ENCODE measurements at regions of chr4 and their contacts with region 1.

Region 1: DNA sequence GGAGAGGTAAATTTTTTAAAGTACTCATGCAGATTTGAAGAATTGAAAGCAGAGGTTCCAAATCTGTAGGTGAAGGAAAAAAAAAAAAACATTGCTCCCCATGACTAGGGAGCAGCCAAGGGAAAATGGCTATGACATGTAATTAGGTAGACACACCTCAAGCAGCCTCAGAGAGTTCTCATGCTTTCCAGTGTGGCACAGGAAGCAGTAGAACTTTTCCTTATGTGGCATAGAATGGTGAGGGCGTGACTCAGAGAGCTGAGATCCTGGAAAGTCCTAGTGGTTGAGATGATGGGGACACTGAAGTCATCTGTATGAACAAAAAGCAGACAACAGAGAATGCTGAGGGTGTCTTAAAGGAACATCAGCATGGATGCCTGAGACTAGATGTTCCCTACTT is 148.6 kb upstream of the NWD2 start:
- DNase-seq: no peak
- H3K4me3 ChIP-seq: no peak overlapping the region
- H3K27ac ChIP-seq: no peak overlapping the region
- H3K4me1 ChIP-seq: no peaks in the 10 kb centered on the region
- H3K27me3 ChIP-seq: no peaks in the 10 kb centered on the region
- CTCF ChIP-seq: no peak

Region 2: DNA sequence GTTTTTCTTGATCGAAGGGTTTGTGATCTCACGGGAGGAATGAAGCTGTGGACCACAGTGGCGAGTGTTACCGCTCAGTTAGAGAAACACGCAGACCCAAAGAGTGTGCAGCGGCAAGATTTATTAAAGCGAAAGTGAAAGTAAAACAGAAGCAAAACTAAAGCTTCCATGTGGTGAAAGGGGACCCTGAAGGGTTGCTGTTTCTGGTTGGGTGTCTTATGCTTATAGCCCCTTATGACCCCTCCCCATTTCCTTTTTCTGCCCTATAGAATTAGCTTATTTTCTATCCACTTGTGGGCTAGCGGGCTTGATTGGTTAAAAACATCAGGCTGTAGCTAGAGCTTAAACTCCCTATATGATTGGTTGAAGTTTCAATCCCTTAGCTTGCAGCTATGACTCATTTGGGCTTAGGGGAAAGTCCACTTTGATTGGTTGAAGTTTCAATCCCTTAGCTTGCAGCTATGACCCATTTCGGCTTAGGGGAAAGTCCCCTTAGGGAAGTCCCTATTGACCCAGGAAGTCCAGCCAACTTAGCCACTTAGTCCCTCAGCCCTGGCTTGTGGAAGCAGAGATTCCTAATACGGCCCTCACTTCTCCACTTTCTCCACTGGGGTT is 22.6 kb before region 1 on chr4:
- CTCF ChIA-PET with region 1: no interaction called
- POLR2A ChIA-PET with region 1: interaction called, 10 read pairs
- intact Hi-C with region 1: no loop called
- DNase-seq: peak in 1 of 2 experiments; percentile 51
- H3K4me3 ChIP-seq: peak overlapping the region; percentile 51
- H3K27ac ChIP-seq: no peak overlapping the region
- H3K4me1 ChIP-seq: no peaks in the 10 kb centered on the region
- H3K27me3 ChIP-seq: no peaks in the 10 kb centered on the region
- CTCF ChIP-seq: no peak

Region 3: GRCh38 chr4:37109756-37110155 is 13.8 kb after region 1 on chr4:
- CTCF ChIA-PET with region 1: no interaction called
- POLR2A ChIA-PET with region 1: no interaction called
- intact Hi-C with region 1: no loop called
- DNase-seq: no peak
- H3K4me3 ChIP-seq: no peak overlapping the region
- H3K27ac ChIP-seq: no peak overlapping the region
- H3K4me1 ChIP-seq: no peaks in the 10 kb centered on the region
- H3K27me3 ChIP-seq: no peaks in the 10 kb centered on the region
- CTCF ChIP-seq: no peak